ENCODE measurements at regions of chr4 and their contacts with region 1.

Region 1: GRCh38 chr4:78864405-78865024 is 74.7 kb downstream of the PAQR3 start:
- DNase-seq: peak; percentile 32
- CTCF ChIP-seq: peak; percentile 66

Region 2: DNA sequence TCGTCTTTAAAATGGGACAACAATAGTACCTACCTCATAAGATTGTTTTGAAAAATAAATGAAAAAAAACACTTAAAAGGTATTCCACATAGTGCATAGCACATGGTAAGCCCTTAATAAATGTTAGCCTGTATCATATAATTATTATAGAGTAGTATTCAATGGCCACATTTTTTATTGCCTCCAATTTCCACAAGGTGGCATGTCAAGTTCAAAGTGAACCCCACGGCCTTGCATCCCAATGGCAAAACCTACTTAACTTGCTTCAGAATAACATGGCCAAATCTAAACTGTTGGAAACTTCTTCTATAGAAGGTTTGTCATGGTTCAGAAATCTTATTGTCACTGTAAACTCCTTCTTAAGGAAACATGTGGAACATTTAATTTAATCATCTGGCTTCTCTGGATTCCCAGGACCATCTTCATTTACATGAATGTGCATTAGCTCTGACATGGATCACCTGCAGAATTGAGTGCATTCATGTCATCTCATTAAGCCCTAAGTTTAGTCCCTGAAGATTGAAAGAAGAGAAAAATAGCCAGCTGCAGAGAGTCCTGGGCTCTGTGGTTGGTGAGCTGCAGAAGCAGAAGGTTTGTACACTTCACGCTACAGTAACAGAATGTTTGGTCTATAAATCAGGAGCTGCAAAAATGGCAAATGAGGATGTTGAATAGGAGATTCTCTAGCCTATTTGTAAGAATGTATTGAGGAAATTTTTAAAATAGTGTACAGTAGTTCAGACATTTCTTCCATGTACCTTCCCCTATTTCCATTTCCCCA is 251.9 kb before region 1 on chr4:
- CTCF ChIA-PET with region 1: interaction called, 10 read pairs
- POLR2A ChIA-PET with region 1: no interaction called
- DNase-seq: no peak
- CTCF ChIP-seq: peak; percentile 61

Region 3: DNA sequence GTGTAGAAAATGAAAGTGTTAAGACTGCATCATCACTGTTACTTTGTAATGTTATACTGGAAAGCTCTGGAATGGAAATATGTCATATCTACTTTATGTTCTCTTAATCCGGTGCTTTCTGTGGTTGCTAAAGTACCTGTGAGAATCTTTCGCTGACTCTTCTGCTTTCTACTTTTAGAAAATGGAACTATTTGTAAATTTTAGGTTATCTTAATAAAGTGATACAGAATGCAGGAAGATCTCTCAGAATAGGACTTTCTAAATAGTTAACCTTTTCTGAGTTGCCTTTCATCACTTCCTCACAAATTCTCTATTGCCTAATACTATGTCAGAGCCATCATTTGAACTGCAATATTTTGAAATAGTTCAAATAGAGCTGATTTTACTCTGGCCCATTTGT is 19.0 kb before region 1 on chr4:
- CTCF ChIA-PET with region 1: interaction called, 25 read pairs
- POLR2A ChIA-PET with region 1: no interaction called
- DNase-seq: peak; percentile 13
- CTCF ChIP-seq: no peak

Region 4: DNA sequence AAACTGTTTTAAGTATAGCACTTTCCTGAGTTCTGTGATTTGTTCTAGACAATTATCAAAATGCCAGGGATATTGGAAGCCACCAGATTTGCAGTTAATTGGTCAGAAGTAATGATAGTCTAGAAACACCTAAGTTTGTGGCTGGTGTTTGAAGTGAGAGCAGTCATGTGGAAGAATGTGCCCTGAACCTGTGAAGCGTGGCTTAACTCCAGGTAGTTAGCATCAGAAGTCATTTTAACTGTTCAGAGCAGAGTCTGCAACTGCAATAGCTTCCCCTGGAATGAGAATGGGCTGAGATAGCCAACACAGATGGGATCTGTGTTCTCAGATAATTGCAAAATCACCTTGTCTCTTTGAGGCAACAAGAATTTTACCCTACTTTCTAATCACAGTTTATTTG is 798.6 kb after region 1 on chr4:
- CTCF ChIA-PET with region 1: no interaction called
- POLR2A ChIA-PET with region 1: no interaction called
- DNase-seq: no peak
- CTCF ChIP-seq: no peak